ENCODE measurements at regions of chr12 and their contacts with region 1.

Region 1: GRCh38 chr12:54398995-54399793 is 14.7 kb upstream of the ZNF385A start:
- DNase-seq: peak; percentile 67
- ATAC-seq: peak; percentile 93
- H3K4me3 ChIP-seq: no peak overlapping the region
- H3K27ac ChIP-seq: no peak overlapping the region
- H3K4me1 ChIP-seq: no peaks in the 10 kb centered on the region
- H3K27me3 ChIP-seq: no peaks in the 10 kb centered on the region
- CTCF ChIP-seq: peak; percentile 98

Region 2: GRCh38 chr12:54324617-54325441 is 74.4 kb before region 1 on chr12 and contains the start of gene COPZ1:
- CTCF ChIA-PET with region 1: no interaction called
- POLR2A ChIA-PET with region 1: no interaction called
- in situ Hi-C with region 1: no loop called
- intact Hi-C with region 1: no loop called
- DNase-seq: peak; percentile 99
- ATAC-seq: peak; percentile 97
- H3K4me3 ChIP-seq: peak within 1 kb of the TSS; percentile 93 to 98
- H3K27ac ChIP-seq: peak within 1 kb of the TSS; percentile 94
- H3K4me1 ChIP-seq: peaks cover 18% of the 10 kb centered on the region
- H3K27me3 ChIP-seq: no peaks in the 10 kb centered on the region
- CTCF ChIP-seq: peak; percentile 94
- total RNA-seq, gene COPZ1: 175 TPM

Region 3: GRCh38 chr12:54417712-54418440 is 18.7 kb after region 1 on chr12:
- CTCF ChIA-PET with region 1: interaction called, 19 read pairs
- POLR2A ChIA-PET with region 1: no interaction called
- in situ Hi-C with region 1: no loop called
- intact Hi-C with region 1: no loop called
- DNase-seq: no peak
- ATAC-seq: peak; percentile 42; the same call in 1 of the 2 replicates
- H3K4me3 ChIP-seq: peak overlapping the region; percentile 71 to 86
- H3K27ac ChIP-seq: peak overlapping the region; percentile 81
- H3K4me1 ChIP-seq: peaks cover 41% of the 10 kb centered on the region
- H3K27me3 ChIP-seq: no peaks in the 10 kb centered on the region
- CTCF ChIP-seq: no peak

Region 4: DNA sequence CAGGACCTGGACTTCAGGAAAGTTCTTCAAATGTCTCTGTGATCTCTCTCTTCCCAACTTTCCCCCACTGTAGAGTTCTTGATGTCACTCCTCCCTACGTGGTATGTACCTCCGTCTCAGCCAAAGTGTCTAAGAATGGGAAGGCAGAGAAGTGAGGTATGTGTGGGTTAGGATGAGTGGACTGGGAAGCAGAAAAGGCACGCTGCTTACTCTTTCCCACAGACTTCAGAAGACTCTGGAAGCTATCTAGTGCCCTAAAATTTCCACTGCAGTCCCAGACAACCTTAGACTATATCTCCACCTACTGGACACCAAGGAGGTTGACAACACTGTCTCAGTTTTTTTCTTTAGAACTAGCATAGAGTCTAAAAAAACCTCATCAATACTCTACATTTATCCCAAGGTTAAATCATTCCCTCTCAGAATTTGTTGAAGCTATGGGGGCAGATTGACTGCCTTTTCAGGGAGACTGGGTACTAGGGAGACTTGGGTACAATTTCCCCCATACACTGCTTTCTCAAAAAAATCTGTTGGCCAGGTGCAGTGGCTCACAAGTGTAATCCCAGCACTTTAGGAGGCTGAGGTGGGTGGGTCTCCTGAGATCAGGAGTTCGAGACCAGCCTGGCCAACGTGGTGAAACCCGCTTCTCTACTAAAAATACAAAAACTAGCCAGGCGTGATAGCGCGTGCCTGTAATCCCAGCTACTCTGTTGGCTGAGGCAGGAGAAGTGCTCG is 40.5 kb after region 1 on chr12:
- CTCF ChIA-PET with region 1: interaction called, 72 read pairs
- POLR2A ChIA-PET with region 1: no interaction called
- in situ Hi-C with region 1: no loop called
- intact Hi-C with region 1: loop called (anchors 1 kb)
- DNase-seq: no peak
- ATAC-seq: peak; percentile 89
- H3K4me3 ChIP-seq: no peak overlapping the region
- H3K27ac ChIP-seq: no peak overlapping the region
- H3K4me1 ChIP-seq: peaks cover 3% of the 10 kb centered on the region; the same call in 1 of the 2 replicates
- H3K27me3 ChIP-seq: peaks cover 5% of the 10 kb centered on the region; the same call in 1 of the 2 replicates
- CTCF ChIP-seq: peak; percentile 84

Region 5: DNA sequence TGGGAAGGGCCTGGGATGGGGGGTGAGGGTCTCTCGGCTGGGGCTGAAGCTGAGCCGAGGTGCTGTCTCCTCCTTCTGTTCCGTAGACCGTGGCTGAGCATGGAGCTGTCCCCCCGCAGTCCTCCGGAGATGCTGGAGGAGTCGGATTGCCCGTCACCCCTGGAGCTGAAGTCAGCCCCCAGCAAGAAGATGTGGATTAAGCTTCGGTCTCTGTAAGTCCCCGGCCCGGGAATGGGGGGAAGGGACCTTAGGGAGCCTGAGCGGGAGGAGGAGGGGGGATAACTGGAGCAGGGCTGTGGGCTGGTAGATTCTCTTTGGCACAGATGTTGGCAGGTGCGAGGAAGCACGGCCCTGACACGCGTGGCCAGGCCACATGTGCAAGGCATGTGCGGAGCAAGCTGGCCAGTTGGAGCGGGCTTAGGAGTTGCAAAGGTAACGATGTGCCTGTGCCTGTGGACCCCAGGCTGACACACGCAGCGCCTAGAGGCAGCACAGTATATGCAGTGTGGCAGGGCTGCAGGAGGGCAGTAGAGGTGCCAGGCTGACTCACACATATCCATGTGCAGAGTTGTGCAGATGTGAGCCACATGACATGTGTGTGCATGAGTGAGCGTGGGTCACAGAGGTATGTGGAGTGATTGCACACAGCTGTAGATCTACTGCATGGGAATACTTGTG is 150.7 kb after region 1 on chr12:
- CTCF ChIA-PET with region 1: interaction called, 12 read pairs
- POLR2A ChIA-PET with region 1: no interaction called
- in situ Hi-C with region 1: no loop called
- intact Hi-C with region 1: no loop called
- DNase-seq: no peak
- ATAC-seq: peak; percentile 66; the same call in 1 of the 2 replicates
- H3K4me3 ChIP-seq: peak overlapping the region; percentile 22 to 45
- H3K27ac ChIP-seq: no peak overlapping the region
- H3K4me1 ChIP-seq: no peaks in the 10 kb centered on the region
- H3K27me3 ChIP-seq: peaks cover 45% of the 10 kb centered on the region
- CTCF ChIP-seq: no peak